Endothelial cell of umbilical vein (primary cell): ENCODE measurements at regions of chr11 and their contacts with region 1.

Region 1: DNA sequence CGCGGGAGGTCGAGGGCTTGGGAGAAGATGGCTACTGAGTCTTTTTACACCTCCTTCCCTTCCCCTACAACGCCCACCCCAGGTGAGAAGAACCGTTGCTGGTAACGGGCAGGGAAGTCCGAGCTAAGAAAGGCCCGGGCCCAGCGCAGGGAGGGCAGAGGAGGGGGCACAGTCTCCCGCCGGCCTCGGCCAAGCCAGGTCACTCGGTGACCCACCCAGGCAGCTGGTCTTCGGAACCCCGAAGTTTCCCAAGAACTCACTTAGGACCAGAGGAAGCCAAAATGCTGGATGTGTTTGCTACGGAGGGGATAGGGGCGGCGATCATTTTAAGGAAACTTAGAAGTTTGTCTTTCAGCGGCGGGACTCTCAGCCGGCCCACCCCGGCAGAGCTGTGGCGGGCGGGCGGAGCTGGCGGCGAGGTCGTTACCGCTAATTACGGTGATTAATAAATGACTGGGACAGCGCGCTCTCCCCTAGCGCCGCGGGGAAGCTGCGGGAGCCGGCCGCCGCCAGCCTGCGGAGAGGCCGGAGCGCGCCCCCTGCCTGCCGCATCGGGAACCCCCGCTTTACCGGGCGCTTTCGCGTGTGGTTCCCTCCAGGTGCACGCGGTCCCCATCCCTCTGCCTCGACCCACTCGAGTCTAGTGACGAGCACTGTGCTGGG is 820 bp downstream of the ROBO3 start:
- DNase-seq: peak; percentile 45
- H3K4me3 ChIP-seq: no peak overlapping the region
- H3K27ac ChIP-seq: no peak overlapping the region
- H3K4me1 ChIP-seq: peaks cover 9% of the 10 kb centered on the region
- H3K27me3 ChIP-seq: peaks cover 89 to 92% of the 10 kb centered on the region in 2 experiments
- CTCF ChIP-seq: peak; percentile 82 to 90
- POLR2A ChIP-seq: no peak

Region 2: DNA sequence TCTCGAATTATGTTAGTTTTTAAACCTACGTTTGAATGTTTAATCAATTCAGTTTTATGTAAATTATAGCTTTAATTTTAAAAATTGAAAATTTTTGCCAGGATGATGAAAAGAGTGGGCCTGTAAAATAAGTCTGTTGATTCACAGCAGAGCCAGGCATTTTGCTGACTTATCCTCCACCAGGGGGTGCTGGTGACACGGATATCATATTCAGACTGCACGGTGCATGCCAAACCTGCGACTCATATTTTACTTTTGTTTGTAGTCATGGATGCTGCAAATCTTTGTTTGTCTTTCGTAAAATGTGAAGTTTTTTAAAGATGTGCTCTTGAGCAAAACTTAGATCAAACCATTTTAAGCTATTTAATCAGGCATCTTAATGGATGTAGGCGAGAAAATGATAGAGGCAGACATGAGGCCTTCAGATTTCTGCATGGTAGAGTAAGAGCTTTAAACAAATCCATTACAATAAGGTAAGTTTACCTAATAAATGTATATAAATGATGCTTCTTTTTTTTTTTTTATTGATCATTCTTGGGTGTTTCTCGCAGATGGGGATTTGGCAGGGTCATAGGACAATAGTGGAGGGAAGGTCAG is 463.6 kb before region 1 on chr11:
- CTCF ChIA-PET with region 1: interaction called, 15 read pairs
- POLR2A ChIA-PET with region 1: no interaction called
- dilution Hi-C with region 1: no loop called
- intact Hi-C with region 1: loop called (anchors 1 kb)
- DNase-seq: peak; percentile 67
- H3K4me3 ChIP-seq: no peak overlapping the region
- H3K27ac ChIP-seq: no peak overlapping the region
- H3K4me1 ChIP-seq: no peaks in the 10 kb centered on the region
- H3K27me3 ChIP-seq: peaks cover 2 to 10% of the 10 kb centered on the region in 2 experiments
- CTCF ChIP-seq: peak; percentile 80
- POLR2A ChIP-seq: no peak

Region 3: DNA sequence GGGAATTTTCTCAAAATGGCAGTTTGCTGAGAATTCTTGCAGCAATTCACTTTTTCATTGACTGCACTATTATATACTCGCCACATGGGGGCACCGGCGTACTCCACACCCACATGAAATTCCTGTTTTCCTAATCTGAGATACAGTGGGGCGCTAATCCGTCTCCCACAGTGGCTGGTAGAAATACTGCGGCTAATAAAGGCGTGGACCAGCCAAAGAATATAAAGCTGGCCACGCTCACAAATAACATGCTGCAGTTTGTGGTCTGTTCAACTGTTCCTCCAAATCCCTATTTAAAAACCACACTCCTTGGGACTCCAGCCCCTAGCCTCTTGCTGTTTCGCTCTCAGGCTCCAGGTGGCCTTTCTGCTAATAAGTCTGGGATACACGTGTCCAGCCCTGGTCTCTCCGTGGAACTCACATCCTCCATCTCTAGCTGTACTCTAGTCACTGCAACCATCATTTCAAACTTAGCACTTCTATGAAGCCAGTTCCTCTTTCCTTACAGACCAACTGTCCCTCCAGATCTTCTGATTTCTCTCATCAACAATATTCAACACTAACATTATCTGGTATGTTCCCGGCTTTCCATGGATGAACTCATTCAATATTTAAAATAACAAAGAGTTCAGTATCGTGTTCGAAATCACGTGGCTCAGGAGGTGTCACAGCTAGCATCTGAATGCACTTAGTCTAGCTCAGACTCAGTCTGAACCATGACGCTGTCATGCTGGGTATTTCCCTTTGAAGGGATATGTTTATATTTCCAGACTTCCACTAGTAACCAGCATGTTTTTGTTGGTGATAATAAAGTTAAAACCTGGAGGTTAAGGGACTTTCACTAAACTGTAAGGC is 221.4 kb before region 1 on chr11:
- CTCF ChIA-PET with region 1: interaction called, 45 read pairs
- POLR2A ChIA-PET with region 1: no interaction called
- dilution Hi-C with region 1: no loop called
- intact Hi-C with region 1: loop called (anchors 1 kb)
- DNase-seq: peak; percentile 87
- H3K4me3 ChIP-seq: peak overlapping the region in 1 of 3 experiments; percentile 32
- H3K27ac ChIP-seq: peak overlapping the region; percentile 22
- H3K4me1 ChIP-seq: peaks cover 18% of the 10 kb centered on the region
- H3K27me3 ChIP-seq: no peaks in the 10 kb centered on the region
- CTCF ChIP-seq: peak; percentile 56 to 79
- POLR2A ChIP-seq: no peak

Region 4: GRCh38 chr11:124758317-124759203 is 107.5 kb before region 1 on chr11:
- CTCF ChIA-PET with region 1: interaction called, 11 read pairs
- POLR2A ChIA-PET with region 1: no interaction called
- dilution Hi-C with region 1: no loop called
- intact Hi-C with region 1: loop called (anchors 1 kb)
- DNase-seq: peak; percentile 81
- H3K4me3 ChIP-seq: peak overlapping the region; percentile 23 to 65 (median 36)
- H3K27ac ChIP-seq: peak overlapping the region; percentile 97
- H3K4me1 ChIP-seq: peaks cover 65% of the 10 kb centered on the region
- H3K27me3 ChIP-seq: no peaks in the 10 kb centered on the region
- CTCF ChIP-seq: peak; percentile 73 to 91
- POLR2A ChIP-seq: peak; percentile 42

Region 5: DNA sequence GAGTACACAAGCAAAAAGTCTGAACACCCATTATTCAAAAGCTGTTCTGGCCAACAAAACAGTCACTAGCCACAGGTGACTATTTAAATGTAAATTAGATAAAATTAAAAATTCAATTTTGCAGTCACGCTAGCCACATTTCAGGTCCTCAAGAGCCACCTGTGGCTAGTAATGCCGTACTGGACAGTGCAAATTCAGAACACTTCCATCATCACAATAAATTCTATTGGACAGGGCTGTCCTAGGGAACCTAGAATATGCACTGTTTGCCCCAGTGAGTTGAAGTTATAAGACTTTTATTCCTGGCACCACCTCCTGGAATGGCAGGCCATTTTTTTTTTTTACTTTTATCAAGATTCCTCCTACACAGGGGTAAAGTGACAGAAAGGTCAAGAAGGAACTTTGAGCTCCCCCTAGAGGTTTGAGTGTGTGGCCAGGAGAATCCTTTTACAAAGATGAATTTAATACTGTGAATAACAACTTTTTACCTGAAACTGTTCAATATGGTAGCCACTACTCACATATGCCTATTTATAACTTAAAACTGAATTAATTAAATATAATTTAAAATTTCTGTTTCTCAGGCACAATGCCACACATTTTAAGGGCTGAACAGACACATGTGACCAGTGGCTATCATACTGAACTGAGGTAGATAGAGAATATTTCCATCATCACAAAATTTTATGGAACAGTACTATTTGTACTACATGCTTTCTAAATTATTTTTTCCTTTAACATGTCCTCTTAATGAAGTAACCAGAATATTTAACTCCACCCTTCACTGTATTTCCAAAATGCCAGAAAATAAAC is 72.4 kb before region 1 on chr11:
- CTCF ChIA-PET with region 1: interaction called, 13 read pairs
- POLR2A ChIA-PET with region 1: no interaction called
- dilution Hi-C with region 1: no loop called
- intact Hi-C with region 1: no loop called
- DNase-seq: peak; percentile 70
- H3K4me3 ChIP-seq: no peak overlapping the region
- H3K27ac ChIP-seq: no peak overlapping the region
- H3K4me1 ChIP-seq: peaks cover 9% of the 10 kb centered on the region
- H3K27me3 ChIP-seq: no peaks in the 10 kb centered on the region
- CTCF ChIP-seq: peak; percentile 64
- POLR2A ChIP-seq: no peak

Region 6: DNA sequence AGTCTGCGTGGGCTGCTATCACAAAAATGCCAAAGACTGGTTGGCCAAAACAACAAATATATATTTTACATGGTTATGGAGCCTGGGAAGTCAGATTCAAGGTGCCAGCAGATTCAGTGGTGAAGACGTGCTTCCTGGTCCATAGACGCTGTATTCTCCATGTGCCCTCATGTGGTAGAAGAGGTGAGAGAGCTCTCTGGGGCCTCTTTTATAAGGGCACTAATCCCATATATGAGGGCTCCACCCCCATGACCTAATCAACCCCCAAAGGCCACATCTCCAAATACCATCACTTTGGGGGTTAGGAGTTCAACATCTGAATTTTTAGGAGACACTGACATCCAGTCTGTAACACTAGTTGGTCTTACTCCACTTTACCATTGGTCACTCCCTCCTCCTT is 10.6 kb before region 1 on chr11:
- CTCF ChIA-PET with region 1: interaction called, 28 read pairs
- POLR2A ChIA-PET with region 1: no interaction called
- dilution Hi-C with region 1: no loop called
- intact Hi-C with region 1: no loop called
- DNase-seq: no peak
- H3K4me3 ChIP-seq: no peak overlapping the region
- H3K27ac ChIP-seq: no peak overlapping the region
- H3K4me1 ChIP-seq: no peaks in the 10 kb centered on the region
- H3K27me3 ChIP-seq: peaks cover 31 to 69% of the 10 kb centered on the region in 2 experiments
- CTCF ChIP-seq: no peak
- POLR2A ChIP-seq: no peak

Region 7: DNA sequence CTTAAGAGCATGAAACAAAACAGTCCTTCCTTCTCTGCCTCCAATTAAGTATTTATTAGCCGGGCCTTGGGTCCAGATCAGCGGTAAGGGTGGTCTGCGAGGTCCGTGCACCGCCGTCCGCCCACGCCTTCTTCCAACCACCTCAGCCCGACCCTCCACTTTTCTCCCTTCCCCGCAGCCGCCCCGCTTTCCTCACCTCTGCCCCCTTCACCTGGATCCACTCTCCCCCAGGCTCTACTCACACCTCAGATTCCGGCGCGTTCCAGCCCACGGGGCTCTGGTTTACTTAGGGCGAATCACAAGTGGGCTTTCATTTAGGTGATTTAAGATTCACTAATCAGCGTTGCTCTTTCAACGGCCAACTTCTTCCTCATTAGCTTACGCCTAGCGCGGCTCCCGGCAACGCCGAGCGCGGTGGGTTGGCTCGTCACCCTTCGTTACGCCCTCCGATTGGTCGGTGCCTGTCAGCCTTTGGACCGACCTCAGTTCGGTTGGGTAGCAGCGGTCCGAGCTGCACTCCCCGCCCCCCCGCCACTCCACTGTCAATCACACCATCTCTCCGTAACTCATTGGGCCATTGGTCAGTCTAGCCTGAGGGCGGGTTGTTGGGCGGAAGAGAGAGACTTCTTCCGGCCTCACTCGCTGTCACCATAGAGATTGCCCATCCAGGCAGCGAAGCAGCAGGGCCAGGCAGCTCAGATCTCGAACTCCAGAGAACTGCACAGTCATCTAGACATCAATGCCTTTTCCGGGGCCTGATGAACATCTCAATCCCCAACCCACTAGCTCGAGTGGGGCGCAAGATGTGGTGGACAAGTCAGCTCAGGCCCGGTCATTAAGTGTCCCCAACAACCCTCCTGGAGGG is 245.5 kb after region 1 on chr11 and contains the start of gene TMEM218:
- CTCF ChIA-PET with region 1: no interaction called
- POLR2A ChIA-PET with region 1: no interaction called
- dilution Hi-C with region 1: no loop called
- intact Hi-C with region 1: no loop called
- DNase-seq: peak; percentile 100
- H3K4me3 ChIP-seq: peak within 1 kb of the TSS; percentile 57 to 85 (median 72)
- H3K27ac ChIP-seq: peak within 1 kb of the TSS; percentile 10
- H3K4me1 ChIP-seq: peaks cover 6% of the 10 kb centered on the region
- H3K27me3 ChIP-seq: peaks cover 0 to 1% of the 10 kb centered on the region in 2 experiments
- CTCF ChIP-seq: no peak
- POLR2A ChIP-seq: no peak
- total RNA-seq, gene TMEM218: 17.9 and 23.8 TPM in 2 replicates